ENCODE measurements at regions of chr3 and their contacts with region 1.

Region 1: DNA sequence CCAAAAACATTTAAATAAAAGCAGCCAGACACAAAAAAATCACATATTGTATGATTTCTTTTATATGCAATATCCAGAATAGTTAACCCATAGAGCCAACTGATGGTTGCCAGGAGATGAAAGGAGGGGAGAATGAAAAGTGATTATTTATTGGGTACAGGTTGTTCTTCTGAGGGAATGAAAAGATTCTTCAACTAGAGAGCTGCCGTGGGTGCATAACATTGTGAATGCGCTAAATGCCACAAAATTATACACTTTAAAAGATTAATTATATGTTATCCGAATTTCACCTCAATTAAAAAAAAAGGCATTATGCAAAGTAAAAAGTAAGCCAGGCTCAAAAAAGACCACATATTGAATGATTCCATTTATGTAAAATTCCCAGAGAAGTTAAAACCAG is 36.1 kb downstream of the PRKAR2A start:
- DNase-seq: no peak
- H3K4me3 Mint-ChIP-seq: peak overlapping the region; percentile 38
- H3K27ac Mint-ChIP-seq: no peak overlapping the region
- H3K4me1 Mint-ChIP-seq: peaks cover 36% of the 10 kb centered on the region
- H3K27me3 Mint-ChIP-seq: no peaks in the 10 kb centered on the region

Region 2: GRCh38 chr3:48847504-48848423 is 36.2 kb after region 1 on chr3 and contains the start of gene PRKAR2A:
- CTCF ChIA-PET with region 1: interaction called, 3 read pairs
- intact Hi-C with region 1: loop called (anchors 1 kb)
- DNase-seq: peak; percentile 81
- H3K4me3 Mint-ChIP-seq: peak within 1 kb of the TSS; percentile 84
- H3K27ac Mint-ChIP-seq: peak within 1 kb of the TSS; percentile 80
- H3K4me1 Mint-ChIP-seq: peaks cover 29% of the 10 kb centered on the region
- H3K27me3 Mint-ChIP-seq: no peaks in the 10 kb centered on the region
- total RNA-seq, gene PRKAR2A: 18.5 to 21.7 TPM